ENCODE measurements at regions of chr12 and their contacts with region 1.

Region 1: GRCh38 chr12:76083904-76084862 is at the start of gene NAP1L1:
- DNase-seq: peak; percentile 92 to 98 (median 97)
- ATAC-seq: peak; percentile 83
- H3K4me3 ChIP-seq: peak within 1 kb of the TSS; percentile 69 to 81
- H3K4me3 Mint-ChIP-seq: peak within 1 kb of the TSS; percentile 99
- H3K27ac ChIP-seq: peak within 1 kb of the TSS; percentile 98 to 99
- H3K27ac Mint-ChIP-seq: peak within 1 kb of the TSS; percentile 100
- H3K4me1 ChIP-seq: peaks cover 34% of the 10 kb centered on the region
- H3K4me1 Mint-ChIP-seq: peaks cover 53% of the 10 kb centered on the region
- H3K27me3 ChIP-seq: no peaks in the 10 kb centered on the region
- H3K27me3 Mint-ChIP-seq: no peaks in the 10 kb centered on the region
- CTCF ChIP-seq: no peak
- total RNA-seq, gene NAP1L1: 581 to 618 TPM

Region 2: GRCh38 chr12:75944097-75944904 is 139.9 kb before region 1 on chr12:
- CTCF ChIA-PET with region 1: no interaction called
- POLR2A ChIA-PET with region 1: no interaction called
- intact Hi-C with region 1: loop called in 1 of 2 experiments (anchors 1 kb)
- DNase-seq: peak in 2 of 9 experiments; percentile 48 to 62
- ATAC-seq: peak; percentile 84
- H3K4me3 ChIP-seq: no peak overlapping the region
- H3K4me3 Mint-ChIP-seq: no peak overlapping the region
- H3K27ac ChIP-seq: peak overlapping the region; percentile 7 to 60
- H3K27ac Mint-ChIP-seq: peak overlapping the region; percentile 89
- H3K4me1 ChIP-seq: peaks cover 11% of the 10 kb centered on the region
- H3K4me1 Mint-ChIP-seq: peaks cover 18% of the 10 kb centered on the region
- H3K27me3 ChIP-seq: no peaks in the 10 kb centered on the region
- H3K27me3 Mint-ChIP-seq: no peaks in the 10 kb centered on the region
- CTCF ChIP-seq: no peak

Region 3: DNA sequence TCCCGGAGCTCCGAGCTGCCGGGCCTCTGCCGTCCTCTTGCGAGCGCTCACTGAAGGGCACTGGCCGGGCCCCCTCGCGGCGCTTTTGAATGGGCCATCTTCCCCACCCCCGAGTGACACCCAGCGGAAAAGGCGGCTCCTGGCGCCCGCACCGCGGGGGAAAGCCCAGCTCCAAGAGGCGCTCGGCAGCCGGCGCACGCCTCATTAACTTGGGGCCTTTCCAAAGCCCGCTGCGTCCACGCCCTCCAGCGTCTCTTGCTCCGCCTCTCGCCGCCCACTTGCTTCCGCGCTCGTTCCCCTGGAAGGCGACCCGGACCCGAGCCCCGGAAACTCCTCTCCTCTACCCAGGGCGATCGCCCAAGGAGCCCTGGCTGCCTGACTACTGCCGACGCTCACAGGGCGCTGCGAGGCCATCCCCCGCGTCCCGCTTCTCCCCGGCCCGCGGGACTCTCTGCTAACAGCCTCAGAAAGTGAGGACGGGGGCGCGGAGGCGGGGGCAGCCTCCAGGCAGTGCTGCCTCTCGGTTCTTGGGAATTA is 52.6 kb before region 1 on chr12 and contains the start of gene PHLDA1:
- CTCF ChIA-PET with region 1: no interaction called
- POLR2A ChIA-PET with region 1: interaction called, 3 read pairs
- intact Hi-C with region 1: loop called (anchors 1 to 2 kb)
- DNase-seq: peak; percentile 78 to 96 (median 88)
- ATAC-seq: peak; percentile 85
- H3K4me3 ChIP-seq: peak within 1 kb of the TSS; percentile 73 to 81
- H3K4me3 Mint-ChIP-seq: peak within 1 kb of the TSS; percentile 94
- H3K27ac ChIP-seq: peak within 1 kb of the TSS; percentile 63 to 76
- H3K27ac Mint-ChIP-seq: peak within 1 kb of the TSS; percentile 80
- H3K4me1 ChIP-seq: peaks cover 20% of the 10 kb centered on the region
- H3K4me1 Mint-ChIP-seq: peaks cover 28% of the 10 kb centered on the region
- H3K27me3 ChIP-seq: no peaks in the 10 kb centered on the region
- H3K27me3 Mint-ChIP-seq: peaks cover 2% of the 10 kb centered on the region
- CTCF ChIP-seq: peak; percentile 40
- total RNA-seq, gene PHLDA1: 5.6 to 5.8 TPM

Region 4: DNA sequence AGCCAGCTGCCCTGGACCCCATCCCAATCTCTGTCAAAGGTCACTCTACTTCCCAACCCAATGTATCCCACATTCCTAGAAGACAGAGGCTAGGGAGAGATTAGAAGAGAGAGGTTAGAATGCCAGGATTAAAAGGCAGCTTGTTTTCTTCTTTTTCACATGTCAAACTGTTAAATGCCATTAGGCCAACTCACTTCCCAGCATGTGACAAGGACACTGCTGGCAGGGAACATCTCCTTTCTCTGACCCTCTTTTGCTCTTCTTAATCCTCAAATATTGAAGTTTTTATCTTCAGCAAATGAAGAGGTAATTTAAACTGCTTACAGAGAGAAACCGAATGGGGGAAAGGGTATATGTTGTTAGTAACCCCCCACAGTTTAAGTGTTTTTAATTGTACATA is 174.9 kb after region 1 on chr12:
- CTCF ChIA-PET with region 1: no interaction called
- POLR2A ChIA-PET with region 1: no interaction called
- intact Hi-C with region 1: no loop called
- DNase-seq: no peak
- ATAC-seq: no peak
- H3K4me3 ChIP-seq: no peak overlapping the region
- H3K4me3 Mint-ChIP-seq: no peak overlapping the region
- H3K27ac ChIP-seq: no peak overlapping the region
- H3K27ac Mint-ChIP-seq: no peak overlapping the region
- H3K4me1 ChIP-seq: no peaks in the 10 kb centered on the region
- H3K4me1 Mint-ChIP-seq: no peaks in the 10 kb centered on the region
- H3K27me3 ChIP-seq: no peaks in the 10 kb centered on the region
- H3K27me3 Mint-ChIP-seq: peaks cover 16% of the 10 kb centered on the region
- CTCF ChIP-seq: no peak

Region 5: GRCh38 chr12:76450690-76451089 is 366.5 kb after region 1 on chr12:
- CTCF ChIA-PET with region 1: no interaction called
- POLR2A ChIA-PET with region 1: no interaction called
- intact Hi-C with region 1: loop called (anchors 5 kb)
- DNase-seq: peak in 1 of 9 experiments; percentile 9
- ATAC-seq: no peak
- H3K4me3 ChIP-seq: no peak overlapping the region
- H3K4me3 Mint-ChIP-seq: no peak overlapping the region
- H3K27ac ChIP-seq: no peak overlapping the region
- H3K27ac Mint-ChIP-seq: no peak overlapping the region
- H3K4me1 ChIP-seq: no peaks in the 10 kb centered on the region
- H3K4me1 Mint-ChIP-seq: peaks cover 33% of the 10 kb centered on the region
- H3K27me3 ChIP-seq: no peaks in the 10 kb centered on the region
- H3K27me3 Mint-ChIP-seq: no peaks in the 10 kb centered on the region
- CTCF ChIP-seq: no peak

Region 6: DNA sequence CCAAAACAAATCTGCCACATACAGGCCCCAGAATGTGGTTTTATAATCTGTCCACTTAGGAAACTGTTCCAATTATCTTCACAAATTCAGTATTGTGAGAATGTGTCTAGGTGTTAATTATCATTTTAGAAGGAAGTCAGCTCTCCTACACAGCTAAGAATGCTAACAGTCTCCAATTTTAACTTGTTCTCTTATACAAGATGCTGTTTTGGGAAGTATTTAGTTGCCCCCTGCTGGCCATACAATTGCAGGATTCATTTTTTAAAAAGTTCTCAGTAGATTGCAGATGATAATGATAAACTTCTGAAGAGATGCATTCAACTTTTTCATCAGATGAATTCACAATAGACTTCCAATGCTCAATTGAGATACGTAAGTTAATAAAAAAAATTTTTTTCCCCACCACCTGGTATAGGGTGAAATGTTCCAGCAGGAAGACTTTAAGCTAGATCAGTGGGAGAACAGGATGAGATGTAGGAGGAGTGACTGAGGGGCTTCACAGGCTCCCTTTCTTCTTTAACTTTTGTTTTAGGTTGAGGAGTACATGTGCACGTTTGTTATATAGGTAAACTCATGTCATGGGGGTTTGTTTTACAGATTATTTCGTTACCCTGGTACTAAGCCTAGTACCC is 502.7 kb after region 1 on chr12:
- CTCF ChIA-PET with region 1: interaction called, 5 read pairs
- POLR2A ChIA-PET with region 1: no interaction called
- intact Hi-C with region 1: loop called in 1 of 2 experiments (anchors 1 kb)
- DNase-seq: peak in 8 of 9 experiments; percentile 2 to 74 (median 44)
- ATAC-seq: peak; percentile 68
- H3K4me3 ChIP-seq: no peak overlapping the region
- H3K4me3 Mint-ChIP-seq: no peak overlapping the region
- H3K27ac ChIP-seq: no peak overlapping the region
- H3K27ac Mint-ChIP-seq: no peak overlapping the region
- H3K4me1 ChIP-seq: no peaks in the 10 kb centered on the region
- H3K4me1 Mint-ChIP-seq: peaks cover 2% of the 10 kb centered on the region
- H3K27me3 ChIP-seq: no peaks in the 10 kb centered on the region
- H3K27me3 Mint-ChIP-seq: no peaks in the 10 kb centered on the region
- CTCF ChIP-seq: peak; percentile 93